Mammary epithelial cell (primary cell): ENCODE measurements at regions of chr9 and their contacts with region 1.

Region 1: GRCh38 chr9:13580760-13581159 is 301.3 kb upstream of the MPDZ start:
- DNase-seq: no peak
- H3K4me3 ChIP-seq: no peak overlapping the region
- H3K27ac ChIP-seq: no peak overlapping the region
- H3K4me1 ChIP-seq: no peaks in the 10 kb centered on the region
- H3K27me3 ChIP-seq: no peaks in the 10 kb centered on the region
- CTCF ChIP-seq: no peak

Region 2: GRCh38 chr9:13615660-13616490 is 35.1 kb after region 1 on chr9:
- CTCF ChIA-PET with region 1: no interaction called
- dilution Hi-C with region 1: loop called (anchors 5 kb)
- in situ Hi-C with region 1: no loop called
- intact Hi-C with region 1: no loop called
- DNase-seq: no peak
- H3K4me3 ChIP-seq: no peak overlapping the region
- H3K27ac ChIP-seq: no peak overlapping the region
- H3K4me1 ChIP-seq: no peaks in the 10 kb centered on the region
- H3K27me3 ChIP-seq: no peaks in the 10 kb centered on the region
- CTCF ChIP-seq: no peak